ENCODE measurements at regions of chr3 and their contacts with region 1.

Region 1: DNA sequence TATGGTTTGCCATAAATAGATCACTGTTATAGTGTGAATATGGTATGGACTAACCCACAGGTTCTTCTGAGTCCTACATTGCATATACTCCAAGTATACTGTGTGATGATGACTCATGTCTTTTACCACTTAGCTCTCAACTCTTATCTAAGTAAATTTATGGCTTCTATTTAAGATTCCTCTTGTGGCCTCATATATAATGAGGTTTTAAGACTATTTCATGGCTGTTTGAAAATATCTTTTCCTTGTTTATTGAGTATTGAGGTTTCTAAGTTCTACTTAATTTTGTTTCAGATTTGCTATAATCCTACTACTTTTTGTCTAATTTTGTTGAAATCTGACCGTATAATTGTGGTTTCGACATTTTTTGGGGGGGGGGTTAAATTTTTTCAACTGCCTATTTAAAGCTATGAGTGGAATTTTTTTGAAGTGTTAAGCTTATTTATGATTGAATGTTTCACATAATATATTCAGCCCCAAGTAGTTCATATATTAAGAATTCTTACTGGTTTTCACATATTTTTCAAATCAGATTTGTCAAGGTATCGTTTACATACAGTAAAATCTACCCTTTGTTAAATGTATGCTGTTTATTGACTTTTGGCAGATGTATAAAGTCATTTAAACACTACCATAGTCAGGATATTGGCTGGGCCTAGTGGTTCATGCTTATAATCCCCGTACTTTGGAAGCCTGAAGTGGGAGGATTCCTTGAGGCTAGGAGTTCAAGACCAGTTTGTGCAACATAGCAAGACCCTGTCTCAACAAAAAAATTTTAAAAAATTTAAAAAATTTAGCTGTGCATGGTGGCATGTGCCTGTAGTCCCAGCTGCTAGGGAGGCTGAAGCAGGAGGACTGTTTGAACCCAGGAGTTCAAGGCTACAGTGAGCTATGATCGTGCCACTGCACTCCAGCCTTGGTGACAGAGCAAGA is 11.7 kb downstream of the SLC25A36 start:
- H3K4me3 ChIP-seq: no peak overlapping the region
- H3K27ac ChIP-seq: peak overlapping the region; percentile 42
- H3K4me1 ChIP-seq: peaks cover 33% of the 10 kb centered on the region
- CTCF ChIP-seq: no peak

Region 2: GRCh38 chr3:140941434-140942220 is 11.7 kb before region 1 on chr3 and contains the start of gene SLC25A36:
- CTCF ChIA-PET with region 1: interaction called, 3 read pairs
- POLR2A ChIA-PET with region 1: interaction called, 11 read pairs
- H3K4me3 ChIP-seq: peak within 1 kb of the TSS; percentile 99
- H3K27ac ChIP-seq: peak within 1 kb of the TSS; percentile 92
- H3K4me1 ChIP-seq: peaks cover 2% of the 10 kb centered on the region; the same call in 1 of the 2 replicates
- CTCF ChIP-seq: peak; percentile 66

Measured in HEK293 (cell line).